ENCODE measurements at regions of chr3 and their contacts with region 1.

Region 1: GRCh38 chr3:82364827-82365226 is 603.4 kb upstream of the GBE1 start:
- DNase-seq: no peak
- H3K4me3 ChIP-seq: no peak overlapping the region
- H3K27ac ChIP-seq: no peak overlapping the region
- H3K4me1 ChIP-seq: no peaks in the 10 kb centered on the region
- H3K27me3 ChIP-seq: no peaks in the 10 kb centered on the region
- CTCF ChIP-seq: no peak
- POLR2A ChIP-seq: no peak

Region 2: GRCh38 chr3:82354228-82354627 is 10.6 kb before region 1 on chr3:
- intact Hi-C with region 1: no loop called
- DNase-seq: no peak
- H3K4me3 ChIP-seq: no peak overlapping the region
- H3K27ac ChIP-seq: no peak overlapping the region
- H3K4me1 ChIP-seq: no peaks in the 10 kb centered on the region
- H3K27me3 ChIP-seq: no peaks in the 10 kb centered on the region
- CTCF ChIP-seq: no peak
- POLR2A ChIP-seq: no peak

Region 3: GRCh38 chr3:82410374-82410773 is 45.5 kb after region 1 on chr3:
- intact Hi-C with region 1: no loop called
- DNase-seq: no peak
- H3K4me3 ChIP-seq: no peak overlapping the region
- H3K27ac ChIP-seq: no peak overlapping the region
- H3K4me1 ChIP-seq: no peaks in the 10 kb centered on the region
- H3K27me3 ChIP-seq: no peaks in the 10 kb centered on the region
- CTCF ChIP-seq: no peak
- POLR2A ChIP-seq: no peak

Region 4: GRCh38 chr3:82839871-82840270 is 475.0 kb after region 1 on chr3:
- intact Hi-C with region 1: no loop called
- DNase-seq: no peak
- H3K4me3 ChIP-seq: no peak overlapping the region
- H3K27ac ChIP-seq: no peak overlapping the region
- H3K4me1 ChIP-seq: no peaks in the 10 kb centered on the region
- H3K27me3 ChIP-seq: no peaks in the 10 kb centered on the region
- CTCF ChIP-seq: no peak
- POLR2A ChIP-seq: no peak

Region 5: DNA sequence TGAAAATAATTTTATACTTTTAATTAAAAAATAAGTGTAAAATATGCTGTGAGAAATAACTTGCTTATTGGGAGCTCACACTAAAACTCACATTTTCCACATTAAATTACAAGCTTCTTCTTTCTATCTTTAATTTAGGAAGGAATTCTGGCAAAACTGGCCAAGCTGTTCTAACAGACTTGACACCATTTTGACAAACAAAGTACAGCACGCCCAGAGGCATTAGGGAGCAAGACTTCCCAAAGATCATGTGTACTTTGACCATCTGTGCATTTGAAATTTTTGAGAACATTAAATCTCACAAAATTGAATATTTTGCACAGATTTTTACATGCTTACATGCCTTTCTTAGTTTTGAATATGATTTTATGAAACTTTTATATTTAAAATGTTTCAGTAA is 1305.6 kb after region 1 on chr3:
- intact Hi-C with region 1: loop called (anchors 5 kb)
- DNase-seq: no peak
- H3K4me3 ChIP-seq: no peak overlapping the region
- H3K27ac ChIP-seq: no peak overlapping the region
- H3K4me1 ChIP-seq: no peaks in the 10 kb centered on the region
- H3K27me3 ChIP-seq: no peaks in the 10 kb centered on the region
- CTCF ChIP-seq: no peak
- POLR2A ChIP-seq: no peak